ENCODE measurements at regions of chr5 and their contacts with region 1.

Region 1: GRCh38 chr5:97183100-97183929 is at the start of gene RIOK2:
- DNase-seq: peak; percentile 96
- ATAC-seq: peak; percentile 94
- H3K4me3 Mint-ChIP-seq: peak within 1 kb of the TSS; percentile 82
- H3K27ac Mint-ChIP-seq: peak within 1 kb of the TSS; percentile 100
- H3K4me1 Mint-ChIP-seq: peaks cover 33% of the 10 kb centered on the region
- H3K27me3 Mint-ChIP-seq: no peaks in the 10 kb centered on the region
- total RNA-seq, gene RIOK2: 30.9 to 39.2 TPM

Region 2: GRCh38 chr5:96388176-96388575 is 795.1 kb before region 1 on chr5:
- CTCF ChIA-PET with region 1: no interaction called
- POLR2A ChIA-PET with region 1: no interaction called
- intact Hi-C with region 1: no loop called
- DNase-seq: no peak
- ATAC-seq: no peak
- H3K4me3 Mint-ChIP-seq: no peak overlapping the region
- H3K27ac Mint-ChIP-seq: no peak overlapping the region
- H3K4me1 Mint-ChIP-seq: no peaks in the 10 kb centered on the region
- H3K27me3 Mint-ChIP-seq: peaks cover 19% of the 10 kb centered on the region

Region 3: GRCh38 chr5:96743065-96743768 is 440.1 kb before region 1 on chr5:
- CTCF ChIA-PET with region 1: no interaction called
- POLR2A ChIA-PET with region 1: no interaction called
- intact Hi-C with region 1: no loop called
- DNase-seq: no peak
- ATAC-seq: no peak
- H3K4me3 Mint-ChIP-seq: no peak overlapping the region
- H3K27ac Mint-ChIP-seq: peak overlapping the region; percentile 79
- H3K4me1 Mint-ChIP-seq: peaks cover 35% of the 10 kb centered on the region
- H3K27me3 Mint-ChIP-seq: no peaks in the 10 kb centered on the region

Region 4: DNA sequence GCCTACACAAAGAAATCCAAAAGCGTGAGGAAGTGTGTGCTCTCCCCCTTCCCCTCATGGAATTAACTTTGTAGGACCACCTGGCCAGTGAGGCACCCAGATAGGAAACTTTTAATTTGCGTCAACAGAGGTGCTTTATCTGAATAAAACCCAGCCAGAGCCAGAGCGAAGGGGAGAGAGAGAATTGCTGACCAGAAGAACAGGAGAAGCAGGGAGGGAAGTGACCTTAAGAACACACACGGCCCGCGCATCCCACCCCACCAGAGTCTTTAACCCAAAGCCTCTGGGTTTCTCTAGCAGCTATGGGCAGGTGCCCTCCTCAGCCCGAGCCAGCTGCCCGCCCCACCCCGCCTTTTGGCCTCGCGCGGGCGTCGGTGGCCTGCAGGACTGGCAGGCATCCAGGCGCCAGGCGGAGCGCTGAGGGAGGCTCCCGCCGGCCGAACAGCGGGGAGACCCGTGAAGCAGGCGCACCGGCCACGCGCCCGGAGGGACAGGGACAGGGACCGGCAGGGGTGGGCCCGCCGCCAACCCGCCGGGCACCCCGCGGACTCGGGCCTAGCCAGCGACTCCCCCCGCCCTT is 376.1 kb before region 1 on chr5:
- CTCF ChIA-PET with region 1: interaction called, 3 read pairs
- POLR2A ChIA-PET with region 1: interaction called, 4 read pairs
- intact Hi-C with region 1: loop called (anchors 1 kb)
- DNase-seq: peak; percentile 65
- ATAC-seq: peak; percentile 5
- H3K4me3 Mint-ChIP-seq: peak overlapping the region; percentile 89
- H3K27ac Mint-ChIP-seq: peak overlapping the region; percentile 94
- H3K4me1 Mint-ChIP-seq: peaks cover 55% of the 10 kb centered on the region
- H3K27me3 Mint-ChIP-seq: no peaks in the 10 kb centered on the region

Region 5: GRCh38 chr5:96876292-96876850 is 306.9 kb before region 1 on chr5 and contains the start of gene ERAP2:
- CTCF ChIA-PET with region 1: no interaction called
- POLR2A ChIA-PET with region 1: no interaction called
- intact Hi-C with region 1: loop called in 1 of 2 experiments (anchors 1 kb)
- DNase-seq: peak; percentile 34
- ATAC-seq: peak; percentile 72
- H3K4me3 Mint-ChIP-seq: peak within 1 kb of the TSS; percentile 86
- H3K27ac Mint-ChIP-seq: peak within 1 kb of the TSS; percentile 94
- H3K4me1 Mint-ChIP-seq: peaks cover 70% of the 10 kb centered on the region
- H3K27me3 Mint-ChIP-seq: no peaks in the 10 kb centered on the region
- total RNA-seq, gene ERAP2: 57.3 to 60.7 TPM

Region 6: GRCh38 chr5:98349251-98349995 is 1166.1 kb after region 1 on chr5:
- CTCF ChIA-PET with region 1: no interaction called
- POLR2A ChIA-PET with region 1: no interaction called
- intact Hi-C with region 1: loop called in 1 of 2 experiments (anchors 5 kb)
- DNase-seq: no peak
- ATAC-seq: no peak
- H3K4me3 Mint-ChIP-seq: no peak overlapping the region
- H3K27ac Mint-ChIP-seq: no peak overlapping the region
- H3K4me1 Mint-ChIP-seq: no peaks in the 10 kb centered on the region
- H3K27me3 Mint-ChIP-seq: no peaks in the 10 kb centered on the region

Region 7: DNA sequence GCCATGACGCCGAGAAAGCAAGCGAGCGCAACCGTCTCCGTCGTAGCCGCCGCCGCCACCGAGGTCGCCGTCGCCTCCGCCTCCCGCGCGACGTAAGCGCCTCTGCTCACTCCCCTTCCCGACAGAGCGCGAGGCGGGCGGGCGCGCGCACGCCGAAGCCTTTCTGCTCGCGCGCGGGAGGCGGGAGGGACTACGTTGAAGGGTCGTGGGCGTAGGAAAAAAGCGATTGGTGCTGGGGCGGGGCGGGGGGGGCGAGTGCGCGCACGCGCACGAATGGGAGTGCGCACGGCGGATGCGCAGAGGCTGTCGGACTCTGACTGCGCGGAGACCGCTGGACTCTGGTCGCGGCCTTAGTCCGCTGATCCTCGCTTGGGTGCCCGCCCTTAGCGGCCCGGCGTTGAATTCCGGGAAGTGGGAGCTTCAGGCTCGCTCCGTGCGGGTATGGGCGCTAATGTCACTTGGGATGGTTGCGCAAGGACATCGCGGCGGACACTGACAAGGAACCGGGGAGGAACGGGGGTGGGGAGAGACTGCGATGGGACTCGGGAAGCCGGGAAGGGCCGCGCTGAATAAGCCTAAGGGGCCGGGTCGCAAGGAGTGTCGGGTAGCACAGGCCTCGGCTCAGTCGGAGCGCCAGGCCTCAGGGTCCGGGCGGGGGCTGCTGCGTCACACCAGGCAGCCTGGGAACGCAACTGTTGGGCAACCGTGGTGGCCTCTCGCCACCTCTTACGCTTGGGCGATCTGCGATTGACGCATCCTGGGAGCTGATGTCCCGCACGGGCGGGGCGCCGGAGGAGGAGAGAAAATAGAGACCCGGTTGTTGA is 1745.8 kb after region 1 on chr5 and contains the start of gene CHD1:
- CTCF ChIA-PET with region 1: no interaction called
- POLR2A ChIA-PET with region 1: no interaction called
- intact Hi-C with region 1: loop called in 1 of 2 experiments (anchors 1 kb)
- DNase-seq: peak; percentile 97
- ATAC-seq: peak; percentile 57
- H3K4me3 Mint-ChIP-seq: peak within 1 kb of the TSS; percentile 93
- H3K27ac Mint-ChIP-seq: peak within 1 kb of the TSS; percentile 99
- H3K4me1 Mint-ChIP-seq: peaks cover 56% of the 10 kb centered on the region
- H3K27me3 Mint-ChIP-seq: no peaks in the 10 kb centered on the region
- total RNA-seq, gene CHD1: 50.8 to 75.5 TPM

Measured in activated CD4-positive, alpha-beta T cell treated with anti-CD3 and anti-CD28 coated beads for 36 hours (primary cell).